GM12878 (cell line): ENCODE measurements at regions of chr2 and their contacts with region 1.

Region 1: GRCh38 chr2:191637182-191638078 is 40.5 kb upstream of the NABP1 start:
- DNase-seq: no peak
- ATAC-seq: peak; percentile 78
- H3K4me3 ChIP-seq: no peak overlapping the region
- H3K27ac ChIP-seq: no peak overlapping the region
- H3K4me1 ChIP-seq: peaks cover 34% of the 10 kb centered on the region
- H3K27me3 ChIP-seq: no peaks in the 10 kb centered on the region
- CTCF ChIP-seq: no peak
- EP300 ChIP-seq: no peak
- POLR2A ChIP-seq: no peak
- RAD21 ChIP-seq: no peak

Region 2: GRCh38 chr2:191617575-191617974 is 19.9 kb before region 1 on chr2:
- CTCF ChIA-PET with region 1: interaction called, 8 read pairs
- POLR2A ChIA-PET with region 1: interaction called, 11 read pairs
- RAD21 ChIA-PET with region 1: interaction called, 18 read pairs
- SMC1A ChIA-PET with region 1: interaction called, 136 read pairs
- in situ Hi-C with region 1: no loop called
- intact Hi-C with region 1: no loop called
- DNase-seq: peak; percentile 76
- ATAC-seq: peak; percentile 88
- H3K4me3 ChIP-seq: no peak overlapping the region
- H3K27ac ChIP-seq: peak overlapping the region; percentile 26; the same call in 1 of the 2 replicates
- H3K4me1 ChIP-seq: peaks cover 13% of the 10 kb centered on the region
- H3K27me3 ChIP-seq: no peaks in the 10 kb centered on the region
- CTCF ChIP-seq: no peak
- EP300 ChIP-seq: peak; percentile 73 to 77; a peak in 3 of 4 replicates
- POLR2A ChIP-seq: no peak
- RAD21 ChIP-seq: peak; percentile 13; the same call in 1 of the 2 replicates

Region 3: GRCh38 chr2:191625016-191625415 is 12.4 kb before region 1 on chr2:
- CTCF ChIA-PET with region 1: interaction called, 8 read pairs
- POLR2A ChIA-PET with region 1: interaction called, 11 read pairs
- RAD21 ChIA-PET with region 1: interaction called, 18 read pairs
- SMC1A ChIA-PET with region 1: interaction called, 136 read pairs
- in situ Hi-C with region 1: no loop called
- intact Hi-C with region 1: no loop called
- DNase-seq: no peak
- ATAC-seq: peak; percentile 69
- H3K4me3 ChIP-seq: no peak overlapping the region
- H3K27ac ChIP-seq: no peak overlapping the region
- H3K4me1 ChIP-seq: no peaks in the 10 kb centered on the region
- H3K27me3 ChIP-seq: no peaks in the 10 kb centered on the region
- CTCF ChIP-seq: no peak
- EP300 ChIP-seq: no peak
- POLR2A ChIP-seq: no peak
- RAD21 ChIP-seq: no peak

Region 4: DNA sequence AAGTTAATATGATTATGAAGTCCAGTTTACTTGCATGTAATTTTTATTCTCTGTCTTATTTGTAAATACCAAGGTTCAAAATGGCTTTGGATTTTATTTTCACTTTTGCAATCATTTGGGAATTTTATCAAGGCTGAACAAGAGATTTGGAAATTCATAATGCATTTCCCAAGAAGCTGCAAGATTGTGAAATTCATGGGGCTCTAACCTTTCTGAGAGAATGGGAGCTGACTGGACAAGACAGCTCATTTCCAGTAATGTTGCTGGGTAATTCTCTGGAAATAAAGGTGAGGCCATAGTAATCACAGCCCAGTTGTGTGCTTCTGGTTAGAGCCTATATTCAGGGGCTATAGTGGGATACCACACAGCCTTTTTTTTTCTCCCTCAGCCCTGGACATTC is 19.0 kb after region 1 on chr2:
- CTCF ChIA-PET with region 1: interaction called, 7 read pairs
- POLR2A ChIA-PET with region 1: interaction called, 3 read pairs
- RAD21 ChIA-PET with region 1: interaction called, 6 read pairs
- SMC1A ChIA-PET with region 1: interaction called, 12 read pairs
- in situ Hi-C with region 1: no loop called
- intact Hi-C with region 1: no loop called
- DNase-seq: no peak
- ATAC-seq: no peak
- H3K4me3 ChIP-seq: no peak overlapping the region
- H3K27ac ChIP-seq: no peak overlapping the region
- H3K4me1 ChIP-seq: no peaks in the 10 kb centered on the region
- H3K27me3 ChIP-seq: no peaks in the 10 kb centered on the region
- CTCF ChIP-seq: no peak
- EP300 ChIP-seq: no peak
- POLR2A ChIP-seq: no peak
- RAD21 ChIP-seq: no peak

Region 5: GRCh38 chr2:191691016-191691735 is 53.7 kb after region 1 on chr2:
- CTCF ChIA-PET with region 1: interaction called, 3 read pairs
- POLR2A ChIA-PET with region 1: no interaction called
- RAD21 ChIA-PET with region 1: interaction called, 6 read pairs
- SMC1A ChIA-PET with region 1: interaction called, 3 read pairs
- in situ Hi-C with region 1: no loop called
- intact Hi-C with region 1: loop called (anchors 2 kb)
- DNase-seq: peak; percentile 59
- ATAC-seq: peak; percentile 68
- H3K4me3 ChIP-seq: no peak overlapping the region
- H3K27ac ChIP-seq: no peak overlapping the region
- H3K4me1 ChIP-seq: no peaks in the 10 kb centered on the region
- H3K27me3 ChIP-seq: no peaks in the 10 kb centered on the region
- CTCF ChIP-seq: peak; percentile 73 to 86 (median 77); a peak in 5 of 6 replicates
- EP300 ChIP-seq: no peak
- POLR2A ChIP-seq: no peak; the same call in 1 of the 2 replicates
- RAD21 ChIP-seq: peak; percentile 96

Region 6: DNA sequence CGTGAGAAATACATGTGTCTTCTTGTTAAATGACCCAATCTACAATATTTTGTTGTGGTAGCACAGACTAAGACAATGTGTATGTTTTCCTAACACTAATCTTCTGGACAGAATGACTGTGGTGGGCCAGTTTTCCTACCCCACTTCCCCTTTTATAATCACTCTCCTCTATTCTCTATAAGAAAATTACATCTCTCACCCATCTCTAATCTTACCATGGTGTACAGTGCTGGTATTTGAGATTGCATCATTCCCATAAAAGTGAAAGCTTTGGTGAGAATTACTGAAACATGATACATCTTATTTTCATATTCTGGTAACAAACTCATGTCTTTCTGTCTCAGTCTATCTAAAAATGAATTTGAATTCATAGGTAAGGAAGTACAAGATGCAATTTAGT is 169.0 kb after region 1 on chr2:
- CTCF ChIA-PET with region 1: no interaction called
- POLR2A ChIA-PET with region 1: no interaction called
- RAD21 ChIA-PET with region 1: no interaction called
- SMC1A ChIA-PET with region 1: no interaction called
- in situ Hi-C with region 1: no loop called
- intact Hi-C with region 1: no loop called
- DNase-seq: no peak
- ATAC-seq: peak; percentile 25; the same call in 2 of the 3 replicates
- H3K4me3 ChIP-seq: no peak overlapping the region
- H3K27ac ChIP-seq: no peak overlapping the region
- H3K4me1 ChIP-seq: no peaks in the 10 kb centered on the region
- H3K27me3 ChIP-seq: no peaks in the 10 kb centered on the region; a peak in 1 of 4 replicates
- CTCF ChIP-seq: no peak
- EP300 ChIP-seq: no peak
- POLR2A ChIP-seq: no peak
- RAD21 ChIP-seq: no peak